Dendritic cell treated with granulocyte-macrophage colony-stimulating factor and Interleukin-4, amounts not matched to agents 40 ng/mL and 50 ng/mL, for 4 days (primary cell): ENCODE measurements at regions of chr15 and their contacts with region 1.

Region 1: DNA sequence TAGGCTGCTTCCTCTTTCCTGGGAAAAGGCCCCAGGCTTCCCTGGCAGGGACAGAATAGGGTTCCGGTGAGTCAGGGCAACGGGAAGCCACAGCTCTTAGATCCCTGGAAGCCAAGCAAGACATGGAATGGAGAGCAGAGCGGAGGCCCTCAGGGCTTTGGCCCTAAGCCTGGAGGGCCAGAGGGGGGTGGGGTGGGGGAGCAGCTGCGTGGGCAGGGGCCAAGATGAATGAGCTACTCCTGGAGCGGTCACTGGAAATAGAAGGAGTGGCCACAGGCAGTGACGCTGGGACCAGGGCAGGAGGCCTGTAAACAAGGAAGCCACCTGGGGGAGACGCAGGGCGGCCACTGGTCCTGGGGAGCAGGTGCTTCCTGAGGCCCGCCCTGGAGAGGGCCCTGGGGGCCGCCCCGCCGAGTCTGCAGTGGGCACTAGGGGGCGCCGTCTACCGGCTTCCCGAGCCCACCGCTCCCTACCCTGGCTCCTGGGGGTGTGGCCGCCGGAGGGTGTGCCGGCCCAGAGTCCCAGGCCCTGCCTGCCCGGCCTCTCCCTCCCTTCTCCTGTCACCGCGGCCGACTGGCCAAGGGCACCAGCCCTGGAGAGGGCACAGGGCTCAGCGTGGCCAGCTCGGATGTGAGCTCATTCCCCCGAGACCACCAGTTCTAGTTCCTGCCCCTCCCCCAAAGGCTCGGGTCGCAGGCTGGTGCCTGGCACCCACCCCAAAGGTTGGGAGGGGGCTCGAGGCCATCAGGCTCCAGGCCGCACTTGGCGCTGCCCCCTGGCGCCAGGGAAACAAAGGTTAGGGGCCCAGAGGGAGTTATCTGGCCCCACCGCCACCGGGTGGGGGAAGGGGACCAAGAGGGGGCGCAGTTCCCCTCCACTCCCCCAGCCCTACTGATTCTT is 12.1 kb downstream of the VPS18 start:
- H3K4me3 Mint-ChIP-seq: peak overlapping the region; percentile 42
- H3K27ac Mint-ChIP-seq: peak overlapping the region; percentile 76
- H3K4me1 Mint-ChIP-seq: peaks cover 88% of the 10 kb centered on the region
- H3K27me3 Mint-ChIP-seq: no peaks in the 10 kb centered on the region

Region 2: DNA sequence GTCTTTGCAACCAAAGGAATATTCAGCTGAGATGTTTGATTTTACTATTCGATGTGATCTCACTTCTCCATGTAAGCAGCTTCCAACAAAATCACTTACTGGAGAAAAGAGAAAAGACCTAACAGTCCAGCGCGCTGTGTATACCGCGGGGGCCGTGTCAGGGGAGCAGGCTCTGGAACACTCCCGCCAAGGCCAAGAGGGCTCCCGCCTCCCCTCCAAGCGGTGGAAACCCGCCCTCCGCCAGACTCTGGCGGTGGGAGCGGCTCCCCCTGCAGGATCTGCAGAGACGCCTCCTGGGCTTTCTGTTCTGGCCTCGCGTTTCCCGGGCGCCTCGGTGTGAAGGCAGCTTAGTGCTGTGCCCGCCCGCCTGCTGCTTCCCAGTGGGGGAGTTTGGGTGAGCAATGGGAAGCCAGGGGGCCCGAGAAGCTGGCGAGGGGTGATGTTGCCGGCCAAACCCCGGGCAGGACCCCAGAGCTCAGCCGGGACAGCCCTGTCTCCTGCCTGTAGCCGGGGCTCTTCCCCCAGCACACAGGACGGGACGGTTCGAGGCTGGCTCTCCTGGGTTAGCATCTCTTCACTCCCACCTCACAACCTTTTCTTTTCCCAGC is 399.3 kb before region 1 on chr15:
- intact Hi-C with region 1: no loop called
- H3K4me3 Mint-ChIP-seq: peak overlapping the region; percentile 54
- H3K27ac Mint-ChIP-seq: no peak overlapping the region
- H3K4me1 Mint-ChIP-seq: peaks cover 25% of the 10 kb centered on the region
- H3K27me3 Mint-ChIP-seq: peaks cover 68% of the 10 kb centered on the region

Region 3: DNA sequence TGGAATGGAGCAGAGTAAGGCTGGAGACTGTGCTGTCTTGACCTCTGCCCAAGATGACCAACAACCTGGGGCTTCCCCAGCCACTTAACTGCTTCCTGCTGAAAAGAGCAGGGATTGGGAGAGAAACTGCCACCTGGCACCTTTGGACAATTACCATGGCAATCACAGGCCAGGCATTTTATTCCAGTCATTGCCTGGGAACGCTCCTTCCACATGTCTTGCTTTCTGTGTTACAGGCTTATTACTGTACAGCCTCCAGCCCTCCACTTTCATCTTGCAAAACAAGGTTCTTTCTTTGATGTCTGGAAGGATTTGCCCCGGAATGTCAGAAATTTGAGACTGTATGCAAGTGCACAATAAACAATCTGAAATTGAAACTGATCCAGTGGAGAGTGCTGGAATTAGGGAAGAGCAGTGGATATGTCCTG is 80.7 kb before region 1 on chr15:
- intact Hi-C with region 1: no loop called
- H3K4me3 Mint-ChIP-seq: no peak overlapping the region
- H3K27ac Mint-ChIP-seq: no peak overlapping the region
- H3K4me1 Mint-ChIP-seq: no peaks in the 10 kb centered on the region
- H3K27me3 Mint-ChIP-seq: peaks cover 11% of the 10 kb centered on the region

Region 4: DNA sequence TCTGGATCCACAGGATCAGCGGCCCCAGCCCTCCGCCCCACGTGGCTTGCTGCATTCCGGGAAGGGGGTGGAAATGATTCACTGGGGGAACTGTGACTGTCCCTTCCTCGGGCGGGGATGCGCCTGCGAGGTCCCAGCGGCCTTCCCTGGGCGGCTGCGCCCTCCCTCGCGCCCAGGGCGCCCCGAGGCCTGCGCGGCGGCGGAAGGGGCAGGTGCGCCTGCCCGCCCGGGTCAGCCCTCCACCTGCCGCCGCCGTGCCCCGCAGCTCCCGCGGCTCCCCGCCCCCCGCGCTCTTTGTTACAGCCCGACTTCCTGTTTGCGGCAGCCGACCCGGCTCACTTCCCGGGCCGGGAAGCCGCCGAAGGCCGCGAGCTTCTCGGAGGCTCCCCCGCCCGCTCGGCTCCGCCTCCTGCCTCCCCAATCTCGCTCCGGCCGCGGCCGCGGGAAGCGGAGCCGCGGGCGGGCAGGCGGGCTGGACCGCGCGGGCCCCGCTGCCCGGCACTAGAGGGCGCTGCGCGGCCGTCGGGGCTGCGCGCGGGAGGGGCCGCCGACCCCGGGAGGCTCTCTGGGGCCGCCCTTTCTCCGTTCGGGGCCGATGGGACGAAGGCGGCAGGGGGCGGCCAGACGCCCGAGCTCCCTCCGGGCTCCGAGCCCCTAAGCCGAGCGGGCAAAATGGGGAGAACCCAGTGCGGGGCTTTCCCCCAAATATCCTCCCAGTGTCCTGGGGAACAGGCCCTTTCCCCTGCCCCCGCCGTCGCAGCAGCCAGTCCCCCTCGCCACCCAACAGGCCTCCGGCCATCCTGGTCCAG is 35.4 kb after region 1 on chr15:
- intact Hi-C with region 1: loop called (anchors 5 kb)
- H3K4me3 Mint-ChIP-seq: peak overlapping the region; percentile 69
- H3K27ac Mint-ChIP-seq: peak overlapping the region; percentile 83
- H3K4me1 Mint-ChIP-seq: peaks cover 48% of the 10 kb centered on the region
- H3K27me3 Mint-ChIP-seq: peaks cover 15% of the 10 kb centered on the region

Region 5: GRCh38 chr15:41022487-41023090 is 116.2 kb after region 1 on chr15:
- intact Hi-C with region 1: loop called (anchors 2 kb)
- H3K4me3 Mint-ChIP-seq: no peak overlapping the region
- H3K27ac Mint-ChIP-seq: no peak overlapping the region
- H3K4me1 Mint-ChIP-seq: peaks cover 19% of the 10 kb centered on the region
- H3K27me3 Mint-ChIP-seq: no peaks in the 10 kb centered on the region

Region 6: GRCh38 chr15:41073028-41073427 is 166.7 kb after region 1 on chr15:
- intact Hi-C with region 1: no loop called
- H3K4me3 Mint-ChIP-seq: no peak overlapping the region
- H3K27ac Mint-ChIP-seq: no peak overlapping the region
- H3K4me1 Mint-ChIP-seq: no peaks in the 10 kb centered on the region
- H3K27me3 Mint-ChIP-seq: no peaks in the 10 kb centered on the region

Region 7: GRCh38 chr15:41180206-41180789 is 274.0 kb after region 1 on chr15:
- intact Hi-C with region 1: loop called (anchors 1 kb)
- H3K4me3 Mint-ChIP-seq: no peak overlapping the region
- H3K27ac Mint-ChIP-seq: no peak overlapping the region
- H3K4me1 Mint-ChIP-seq: peaks cover 5% of the 10 kb centered on the region
- H3K27me3 Mint-ChIP-seq: no peaks in the 10 kb centered on the region